ENCODE measurements at regions of chr14 and their contacts with region 1.

Region 1: DNA sequence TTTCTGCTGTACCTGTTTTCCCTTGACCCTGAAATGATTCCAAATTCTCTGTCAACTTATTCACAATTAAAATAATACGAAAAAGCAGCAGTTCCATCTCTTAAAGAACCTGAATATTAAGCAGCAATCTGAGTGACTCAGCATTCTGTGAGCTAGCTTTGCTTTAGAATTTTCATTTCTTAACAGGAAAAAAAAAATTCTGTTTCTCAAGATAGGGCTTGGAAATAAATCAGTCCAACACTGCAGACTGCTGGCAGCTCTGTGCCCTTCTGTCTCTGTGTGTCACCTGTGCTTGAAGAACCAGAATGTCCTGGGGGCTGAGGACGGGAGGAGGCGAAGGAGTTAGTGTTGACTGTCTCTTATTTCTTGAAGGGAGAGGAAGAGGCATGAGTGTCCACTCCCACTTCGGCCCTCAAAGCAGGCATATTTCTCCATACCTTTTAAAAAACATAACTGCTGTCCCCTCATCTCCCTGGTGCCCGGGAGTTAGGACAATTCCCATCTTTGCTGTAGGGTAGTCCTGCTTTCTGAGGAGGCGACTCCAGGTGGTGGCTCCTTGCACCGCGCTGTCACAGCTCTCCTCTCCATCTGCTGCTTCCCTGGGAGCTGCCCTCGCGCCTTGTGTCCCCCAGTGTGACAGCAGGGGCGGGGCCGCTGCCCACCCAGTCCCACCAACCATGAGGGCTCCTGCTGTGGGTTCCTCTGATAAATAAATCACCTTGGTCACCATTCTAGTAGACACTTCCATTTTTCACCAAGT is 203.1 kb downstream of the CALM1 start:
- DNase-seq: no peak
- H3K4me3 ChIP-seq: no peak overlapping the region
- H3K27ac ChIP-seq: no peak overlapping the region
- H3K4me1 ChIP-seq: peaks cover 0 to 6% of the 10 kb centered on the region in 2 donors
- H3K27me3 ChIP-seq: no peaks in the 10 kb centered on the region
- CTCF ChIP-seq: peak; percentile 6 to 49 (median 34)

Region 2: GRCh38 chr14:90301668-90302090 is 298.2 kb before region 1 on chr14:
- intact Hi-C with region 1: loop called (anchors 5 kb)
- DNase-seq: no peak
- H3K4me3 ChIP-seq: no peak overlapping the region
- H3K27ac ChIP-seq: peak overlapping the region; percentile 37 to 40
- H3K4me1 ChIP-seq: peaks cover 0 to 14% of the 10 kb centered on the region in 2 donors
- H3K27me3 ChIP-seq: no peaks in the 10 kb centered on the region
- CTCF ChIP-seq: peak in 2 of 3 experiments; percentile 52 to 63

Region 3: DNA sequence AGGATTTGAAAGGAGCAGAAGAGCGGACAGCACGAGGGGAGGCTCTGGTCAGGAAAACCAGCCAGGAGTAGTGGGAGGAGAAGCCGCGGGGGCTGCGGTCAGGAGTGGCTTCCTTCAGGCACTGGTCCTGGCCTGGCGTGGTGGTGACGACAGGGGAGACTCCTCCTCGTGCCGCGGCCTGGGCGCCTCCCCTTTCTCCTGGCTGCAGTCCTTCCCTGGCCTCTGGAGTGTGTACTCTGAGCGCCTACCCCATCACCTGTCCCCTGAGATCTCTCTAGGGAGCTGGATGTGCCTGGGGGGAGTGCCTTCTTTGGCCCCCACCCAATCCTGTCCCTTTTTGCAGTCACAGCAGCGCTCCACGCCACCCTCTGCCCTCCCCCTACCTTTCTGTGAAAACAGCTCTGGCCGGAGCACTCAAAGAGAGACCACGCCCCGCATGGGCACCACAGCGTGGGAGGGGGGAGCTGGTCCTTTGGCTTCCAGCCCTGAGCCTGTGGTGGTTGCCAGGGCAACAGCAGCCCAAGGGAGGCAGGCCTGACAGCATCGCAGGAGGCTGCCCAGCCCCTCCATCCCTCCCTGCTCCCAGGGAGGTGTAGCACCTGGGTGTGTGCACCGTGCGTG is 77.2 kb before region 1 on chr14:
- intact Hi-C with region 1: no loop called
- DNase-seq: peak in 1 of 2 donors; percentile 80
- H3K4me3 ChIP-seq: peak overlapping the region in 1 of 2 donors; percentile 1
- H3K27ac ChIP-seq: peak overlapping the region; percentile 71 to 83
- H3K4me1 ChIP-seq: peaks cover 16 to 39% of the 10 kb centered on the region in 2 donors
- H3K27me3 ChIP-seq: no peaks in the 10 kb centered on the region
- CTCF ChIP-seq: no peak

Region 4: GRCh38 chr14:90661866-90662265 is 61.9 kb after region 1 on chr14:
- intact Hi-C with region 1: no loop called
- DNase-seq: no peak
- H3K4me3 ChIP-seq: no peak overlapping the region
- H3K27ac ChIP-seq: no peak overlapping the region
- H3K4me1 ChIP-seq: no peaks in the 10 kb centered on the region
- H3K27me3 ChIP-seq: no peaks in the 10 kb centered on the region
- CTCF ChIP-seq: no peak

Region 5: DNA sequence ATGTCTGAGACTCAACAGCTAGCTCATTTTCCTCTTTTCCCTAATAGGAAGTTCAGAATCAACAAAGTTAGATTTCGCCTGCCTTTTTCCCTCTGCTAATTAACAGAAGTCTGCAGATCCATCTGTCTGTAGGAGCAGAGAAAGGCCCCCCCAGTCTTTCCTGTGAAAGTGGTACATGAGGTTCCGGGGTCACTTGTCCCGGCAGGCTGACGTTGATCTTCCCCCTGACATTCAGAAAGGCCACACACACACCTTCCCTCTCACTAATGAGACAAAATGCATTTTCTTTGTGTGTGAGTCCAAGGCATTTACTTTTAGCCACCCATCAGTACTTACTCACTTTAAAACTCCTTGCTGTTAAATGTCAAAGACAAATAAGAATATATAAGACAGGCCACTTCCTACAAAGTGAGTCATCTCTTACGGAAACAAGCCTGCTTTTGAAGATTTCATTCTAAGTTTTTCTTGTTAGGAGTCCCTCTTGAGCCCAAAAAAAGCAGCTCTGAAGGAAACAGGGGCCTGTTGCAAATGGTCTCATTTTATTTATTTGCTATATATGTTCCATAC is 77.6 kb after region 1 on chr14:
- intact Hi-C with region 1: loop called (anchors 2 kb)
- DNase-seq: no peak
- H3K4me3 ChIP-seq: no peak overlapping the region
- H3K27ac ChIP-seq: peak overlapping the region; percentile 77 to 92
- H3K4me1 ChIP-seq: peaks cover 8 to 20% of the 10 kb centered on the region in 2 donors
- H3K27me3 ChIP-seq: no peaks in the 10 kb centered on the region
- CTCF ChIP-seq: no peak

Measured in ascending aorta (tissue), 2 donors.